ENCODE measurements at regions of chr1 and their contacts with region 1.

Region 1: DNA sequence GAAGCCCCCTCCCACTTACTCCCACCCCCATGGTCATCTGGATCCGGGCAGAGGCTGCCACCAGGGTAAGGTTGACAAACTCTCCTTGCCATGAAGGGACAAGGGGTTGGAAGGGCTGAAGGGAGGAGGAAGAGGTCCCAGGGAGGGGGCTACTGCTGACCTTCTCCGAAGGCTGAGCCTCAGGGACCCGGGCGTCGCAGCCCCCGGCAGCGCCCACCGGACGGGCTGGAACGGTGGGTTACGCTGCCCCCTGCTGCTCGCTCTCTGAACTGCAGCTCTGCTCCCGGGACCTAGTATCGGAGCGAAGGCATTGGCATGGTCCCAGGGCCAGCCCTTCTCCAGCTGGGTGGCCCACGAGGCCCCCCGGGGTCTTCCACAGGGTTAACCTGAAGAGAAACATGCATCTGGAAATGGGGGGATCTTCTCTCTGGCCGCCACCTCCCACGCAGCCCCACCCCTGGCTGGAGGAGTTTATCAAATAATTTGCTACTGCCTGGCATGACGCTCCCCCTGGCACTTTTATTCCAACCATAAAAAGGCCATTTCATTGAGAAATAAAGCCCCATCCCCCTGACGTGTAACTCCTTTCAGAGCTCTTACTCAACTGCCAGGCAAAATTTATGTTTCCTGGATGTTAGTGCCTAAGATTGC is 70.4 kb upstream of the TARDBP start:
- DNase-seq: no peak
- H3K4me3 ChIP-seq: no peak overlapping the region
- CTCF ChIP-seq: peak; percentile 89

Region 2: DNA sequence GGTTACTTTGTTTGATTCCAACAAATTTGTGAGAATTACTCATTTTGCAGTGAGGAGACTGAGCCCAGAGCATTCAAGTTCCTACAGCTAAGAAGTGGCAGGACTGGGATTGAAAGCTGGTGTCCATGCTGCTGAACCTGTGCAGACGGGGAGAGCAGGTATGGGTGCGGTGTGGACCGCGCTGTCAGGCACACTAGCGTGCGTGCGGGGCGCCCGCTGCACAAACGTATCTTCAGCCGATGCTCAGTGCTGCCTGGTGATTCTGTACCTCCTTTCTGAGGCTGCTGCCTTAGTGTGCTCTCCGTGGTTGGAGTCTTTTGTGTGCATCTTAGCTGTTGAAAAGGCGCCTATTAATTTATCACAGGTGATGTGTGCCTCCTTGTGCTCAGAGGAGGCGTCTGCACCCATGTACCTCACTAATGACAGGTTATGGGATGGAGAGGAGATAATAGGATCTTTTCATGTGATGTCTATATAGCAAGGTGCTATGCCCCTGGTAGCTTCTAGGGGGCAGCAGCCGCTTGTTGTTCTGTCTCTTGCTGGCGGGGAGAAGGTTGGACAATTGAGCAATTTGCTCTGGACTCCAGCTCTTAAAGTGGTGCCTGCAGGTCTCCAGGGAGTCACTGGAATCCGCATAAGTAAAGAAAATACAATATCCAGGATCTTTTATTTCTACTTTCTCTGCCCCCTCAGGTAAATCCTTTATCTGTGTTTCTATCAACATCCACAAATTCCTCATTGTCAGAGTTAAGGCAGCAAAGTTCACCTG is 434.7 kb before region 1 on chr1:
- CTCF ChIA-PET with region 1: interaction called, 34 read pairs
- POLR2A ChIA-PET with region 1: no interaction called
- DNase-seq: peak; percentile 42
- H3K4me3 ChIP-seq: no peak overlapping the region
- CTCF ChIP-seq: peak; percentile 82